PC-9 (cell line): ENCODE measurements at regions of chr16 and their contacts with region 1.

Region 1: GRCh38 chr16:68040507-68041288 is 17.6 kb downstream of the DUS2 start:
- DNase-seq: peak; percentile 55 to 83
- H3K4me3 ChIP-seq: no peak overlapping the region
- H3K27ac ChIP-seq: no peak overlapping the region
- H3K4me1 ChIP-seq: no peaks in the 10 kb centered on the region
- H3K27me3 ChIP-seq: no peaks in the 10 kb centered on the region
- CTCF ChIP-seq: peak; percentile 94

Region 2: DNA sequence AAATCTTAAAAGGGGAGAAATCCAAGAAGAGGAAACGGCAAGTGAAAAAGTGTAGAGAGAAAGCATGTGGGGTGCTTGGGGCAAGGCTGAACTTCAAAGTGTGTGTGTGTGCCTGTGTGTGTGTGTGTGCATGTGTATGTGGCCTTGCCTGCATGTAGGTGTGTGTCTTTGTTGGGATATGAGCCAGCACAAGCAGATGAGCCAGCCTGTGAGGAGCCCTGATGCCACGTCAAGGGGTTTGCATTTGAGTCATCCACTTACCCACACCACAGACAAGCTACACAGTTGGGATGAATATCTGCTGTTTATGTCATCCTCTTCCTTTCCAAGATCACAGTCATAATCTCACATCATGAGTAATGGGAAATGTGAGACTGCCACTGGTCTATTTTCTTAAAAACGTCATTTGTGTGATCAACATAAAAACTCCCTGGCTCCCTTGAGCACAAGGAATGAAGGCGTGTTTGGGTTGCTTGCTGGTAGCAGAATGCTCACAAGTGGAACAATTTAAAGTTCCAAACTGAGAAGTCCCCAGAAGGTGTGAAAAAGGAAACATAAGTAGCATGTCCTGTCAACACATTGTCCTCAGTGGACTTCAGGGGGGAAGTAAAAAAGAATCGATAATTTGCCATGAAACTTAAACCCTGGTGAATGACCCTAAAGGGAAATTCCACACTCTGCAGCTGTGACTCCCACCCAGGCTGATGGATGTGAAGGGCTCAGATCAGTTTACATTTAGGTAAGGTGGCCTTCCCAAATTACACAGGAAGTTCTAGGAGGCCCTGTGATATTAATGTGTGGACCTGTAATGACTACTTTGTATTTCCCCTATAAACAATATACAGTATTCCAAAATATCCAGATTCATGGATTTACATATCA is 728.9 kb before region 1 on chr16:
- CTCF ChIA-PET with region 1: no interaction called
- POLR2A ChIA-PET with region 1: no interaction called
- intact Hi-C with region 1: no loop called
- DNase-seq: peak; percentile 51 to 95
- H3K4me3 ChIP-seq: no peak overlapping the region
- H3K27ac ChIP-seq: peak overlapping the region; percentile 70
- H3K4me1 ChIP-seq: peaks cover 23% of the 10 kb centered on the region
- H3K27me3 ChIP-seq: no peaks in the 10 kb centered on the region
- CTCF ChIP-seq: no peak

Region 3: GRCh38 chr16:67449336-67449735 is 591.4 kb before region 1 on chr16:
- CTCF ChIA-PET with region 1: no interaction called
- POLR2A ChIA-PET with region 1: interaction called, 10 read pairs
- intact Hi-C with region 1: no loop called
- DNase-seq: no peak
- H3K4me3 ChIP-seq: no peak overlapping the region
- H3K27ac ChIP-seq: no peak overlapping the region
- H3K4me1 ChIP-seq: peaks cover 4% of the 10 kb centered on the region; the same call in 1 of the 2 replicates
- H3K27me3 ChIP-seq: no peaks in the 10 kb centered on the region
- CTCF ChIP-seq: no peak

Region 4: GRCh38 chr16:67816240-67817031 is 224.3 kb before region 1 on chr16:
- CTCF ChIA-PET with region 1: interaction called, 8 read pairs
- POLR2A ChIA-PET with region 1: no interaction called
- intact Hi-C with region 1: loop called (anchors 5 kb)
- DNase-seq: peak in 1 of 2 experiments; percentile 86
- H3K4me3 ChIP-seq: no peak overlapping the region
- H3K27ac ChIP-seq: no peak overlapping the region
- H3K4me1 ChIP-seq: 0 out of 2 replicates have a peak, but pooled peaks cover 4% of the 10 kb centered on the region
- H3K27me3 ChIP-seq: no peaks in the 10 kb centered on the region
- CTCF ChIP-seq: peak; percentile 99

Region 5: GRCh38 chr16:67942200-67942509 is 98.5 kb before region 1 on chr16:
- CTCF ChIA-PET with region 1: interaction called, 3 read pairs
- POLR2A ChIA-PET with region 1: no interaction called
- intact Hi-C with region 1: loop called (anchors 10 kb)
- DNase-seq: peak in 1 of 2 experiments; percentile 38
- H3K4me3 ChIP-seq: no peak overlapping the region
- H3K27ac ChIP-seq: no peak overlapping the region
- H3K4me1 ChIP-seq: peaks cover 3% of the 10 kb centered on the region; the same call in 1 of the 2 replicates
- H3K27me3 ChIP-seq: no peaks in the 10 kb centered on the region
- CTCF ChIP-seq: peak; percentile 76

Region 6: GRCh38 chr16:67993189-67994039 is 47.3 kb before region 1 on chr16:
- CTCF ChIA-PET with region 1: no interaction called
- POLR2A ChIA-PET with region 1: no interaction called
- intact Hi-C with region 1: loop called (anchors 1 kb)
- DNase-seq: peak in 1 of 2 experiments; percentile 75
- H3K4me3 ChIP-seq: no peak overlapping the region
- H3K27ac ChIP-seq: no peak overlapping the region
- H3K4me1 ChIP-seq: no peaks in the 10 kb centered on the region
- H3K27me3 ChIP-seq: no peaks in the 10 kb centered on the region
- CTCF ChIP-seq: peak; percentile 94

Region 7: GRCh38 chr16:68155425-68155824 is 114.7 kb after region 1 on chr16:
- CTCF ChIA-PET with region 1: no interaction called
- POLR2A ChIA-PET with region 1: no interaction called
- intact Hi-C with region 1: no loop called
- DNase-seq: no peak
- H3K4me3 ChIP-seq: no peak overlapping the region
- H3K27ac ChIP-seq: no peak overlapping the region
- H3K4me1 ChIP-seq: no peaks in the 10 kb centered on the region
- H3K27me3 ChIP-seq: no peaks in the 10 kb centered on the region
- CTCF ChIP-seq: no peak